ENCODE measurements at regions of chr1 and their contacts with region 1.

Region 1: GRCh38 chr1:225923692-225924555 is at the start of gene PYCR2:
- DNase-seq: peak; percentile 93
- ATAC-seq: peak; percentile 98
- H3K4me3 Mint-ChIP-seq: peak within 1 kb of the TSS; percentile 95
- H3K27ac Mint-ChIP-seq: peak within 1 kb of the TSS; percentile 88
- H3K4me1 Mint-ChIP-seq: peaks cover 20% of the 10 kb centered on the region
- H3K27me3 Mint-ChIP-seq: no peaks in the 10 kb centered on the region
- CTCF ChIP-seq: no peak
- total RNA-seq, gene PYCR2: 109 and 110 TPM in 2 replicates

Region 2: GRCh38 chr1:225467193-225468020 is 456.5 kb before region 1 on chr1:
- CTCF ChIA-PET with region 1: no interaction called
- POLR2A ChIA-PET with region 1: interaction called, 23 read pairs
- intact Hi-C with region 1: loop called (anchors 1 kb)
- DNase-seq: peak; percentile 75
- ATAC-seq: peak; percentile 86
- H3K4me3 Mint-ChIP-seq: peak overlapping the region; percentile 90
- H3K27ac Mint-ChIP-seq: peak overlapping the region; percentile 98
- H3K4me1 Mint-ChIP-seq: peaks cover 40% of the 10 kb centered on the region
- H3K27me3 Mint-ChIP-seq: no peaks in the 10 kb centered on the region
- CTCF ChIP-seq: no peak

Region 3: GRCh38 chr1:225652729-225653462 is 271.0 kb before region 1 on chr1 and contains the start of gene ENAH:
- CTCF ChIA-PET with region 1: no interaction called
- POLR2A ChIA-PET with region 1: no interaction called
- intact Hi-C with region 1: loop called (anchors 10 kb)
- DNase-seq: peak; percentile 49
- ATAC-seq: peak; percentile 69
- H3K4me3 Mint-ChIP-seq: peak within 1 kb of the TSS; percentile 92
- H3K27ac Mint-ChIP-seq: peak within 1 kb of the TSS; percentile 24
- H3K4me1 Mint-ChIP-seq: peaks cover 13% of the 10 kb centered on the region
- H3K27me3 Mint-ChIP-seq: peaks cover 9% of the 10 kb centered on the region
- CTCF ChIP-seq: no peak
- total RNA-seq, gene ENAH: 1.2 and 1.4 TPM in 2 replicates

Region 4: GRCh38 chr1:225754940-225755641 is 168.8 kb before region 1 on chr1:
- CTCF ChIA-PET with region 1: no interaction called
- POLR2A ChIA-PET with region 1: no interaction called
- intact Hi-C with region 1: no loop called
- DNase-seq: no peak
- ATAC-seq: no peak
- H3K4me3 Mint-ChIP-seq: no peak overlapping the region
- H3K27ac Mint-ChIP-seq: no peak overlapping the region
- H3K4me1 Mint-ChIP-seq: no peaks in the 10 kb centered on the region
- H3K27me3 Mint-ChIP-seq: no peaks in the 10 kb centered on the region
- CTCF ChIP-seq: no peak

Region 5: DNA sequence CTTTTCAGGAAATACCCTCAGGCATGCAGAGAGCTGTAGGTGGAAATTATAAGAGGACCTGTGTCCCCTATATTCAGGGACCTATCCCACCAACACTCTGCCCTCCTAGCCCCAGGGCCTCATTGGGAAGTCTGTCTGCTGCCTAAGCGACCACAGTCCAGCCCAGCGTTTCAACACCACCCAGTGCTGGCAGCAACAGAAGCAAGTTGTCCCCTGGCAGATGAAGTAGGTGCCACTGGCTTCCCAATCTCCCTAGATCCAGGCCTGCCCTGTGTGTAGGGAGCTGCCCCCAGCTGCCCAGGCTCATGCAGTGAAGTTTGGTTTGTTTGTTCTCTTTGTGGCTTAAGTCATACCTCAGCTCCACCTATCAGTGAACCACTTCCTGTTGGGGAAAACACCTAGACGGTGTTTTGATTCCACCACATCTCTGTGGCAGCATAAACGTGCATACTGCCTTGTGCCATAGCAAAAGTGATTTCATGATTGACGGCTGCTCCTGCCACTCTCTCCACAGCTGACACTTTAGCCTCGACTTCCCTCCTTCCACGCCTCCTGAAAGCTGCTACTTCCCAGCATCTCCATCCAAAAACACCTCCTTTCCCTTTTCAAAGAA is 26.9 kb before region 1 on chr1:
- CTCF ChIA-PET with region 1: no interaction called
- POLR2A ChIA-PET with region 1: interaction called, 33 read pairs
- intact Hi-C with region 1: no loop called
- DNase-seq: peak; percentile 34
- ATAC-seq: peak; percentile 99
- H3K4me3 Mint-ChIP-seq: peak overlapping the region; percentile 48
- H3K27ac Mint-ChIP-seq: peak overlapping the region; percentile 95
- H3K4me1 Mint-ChIP-seq: peaks cover 37% of the 10 kb centered on the region
- H3K27me3 Mint-ChIP-seq: no peaks in the 10 kb centered on the region
- CTCF ChIP-seq: no peak

Region 6: GRCh38 chr1:225911191-225912130 is 12.5 kb before region 1 on chr1:
- CTCF ChIA-PET with region 1: interaction called, 5 read pairs
- POLR2A ChIA-PET with region 1: interaction called, 15 read pairs
- intact Hi-C with region 1: no loop called
- DNase-seq: peak; percentile 66
- ATAC-seq: peak; percentile 90
- H3K4me3 Mint-ChIP-seq: no peak overlapping the region
- H3K27ac Mint-ChIP-seq: no peak overlapping the region
- H3K4me1 Mint-ChIP-seq: peaks cover 23% of the 10 kb centered on the region
- H3K27me3 Mint-ChIP-seq: no peaks in the 10 kb centered on the region
- CTCF ChIP-seq: peak; percentile 40

Region 7: GRCh38 chr1:225937048-225937968 is 13.4 kb after region 1 on chr1:
- CTCF ChIA-PET with region 1: no interaction called
- POLR2A ChIA-PET with region 1: interaction called, 26 read pairs
- intact Hi-C with region 1: no loop called
- DNase-seq: no peak
- ATAC-seq: no peak
- H3K4me3 Mint-ChIP-seq: no peak overlapping the region
- H3K27ac Mint-ChIP-seq: no peak overlapping the region
- H3K4me1 Mint-ChIP-seq: no peaks in the 10 kb centered on the region
- H3K27me3 Mint-ChIP-seq: peaks cover 3% of the 10 kb centered on the region
- CTCF ChIP-seq: no peak